Cardiac septum (tissue), 1 donor: ENCODE measurements at regions of chr11 and their contacts with region 1.

Region 1: GRCh38 chr11:116787786-116788486 is at the start of gene ZPR1:
- DNase-seq: peak; percentile 96
- total RNA-seq, gene ZPR1: 24.8 TPM

Region 2: DNA sequence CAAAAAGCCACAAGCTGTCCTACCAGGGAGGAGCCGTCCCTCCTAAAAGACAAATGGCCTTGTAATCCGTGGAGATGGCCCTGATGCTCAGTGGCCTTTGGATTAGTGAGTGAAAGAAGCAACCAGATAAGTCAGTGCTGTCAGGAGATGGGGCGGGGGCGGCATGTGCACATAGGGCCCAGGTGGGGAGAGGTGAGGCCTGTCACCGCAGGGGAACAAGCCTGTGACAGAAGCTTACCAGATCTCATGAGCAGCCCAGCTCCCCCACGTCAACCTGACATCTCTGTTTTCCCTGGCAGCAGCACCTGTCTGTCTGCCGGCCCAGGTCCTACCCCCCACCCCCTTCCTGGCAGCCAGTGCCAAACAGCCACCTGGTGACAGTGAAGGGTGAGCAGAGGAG is 177.7 kb before region 1 on chr11:
- intact Hi-C with region 1: no loop called
- DNase-seq: no peak

Region 3: DNA sequence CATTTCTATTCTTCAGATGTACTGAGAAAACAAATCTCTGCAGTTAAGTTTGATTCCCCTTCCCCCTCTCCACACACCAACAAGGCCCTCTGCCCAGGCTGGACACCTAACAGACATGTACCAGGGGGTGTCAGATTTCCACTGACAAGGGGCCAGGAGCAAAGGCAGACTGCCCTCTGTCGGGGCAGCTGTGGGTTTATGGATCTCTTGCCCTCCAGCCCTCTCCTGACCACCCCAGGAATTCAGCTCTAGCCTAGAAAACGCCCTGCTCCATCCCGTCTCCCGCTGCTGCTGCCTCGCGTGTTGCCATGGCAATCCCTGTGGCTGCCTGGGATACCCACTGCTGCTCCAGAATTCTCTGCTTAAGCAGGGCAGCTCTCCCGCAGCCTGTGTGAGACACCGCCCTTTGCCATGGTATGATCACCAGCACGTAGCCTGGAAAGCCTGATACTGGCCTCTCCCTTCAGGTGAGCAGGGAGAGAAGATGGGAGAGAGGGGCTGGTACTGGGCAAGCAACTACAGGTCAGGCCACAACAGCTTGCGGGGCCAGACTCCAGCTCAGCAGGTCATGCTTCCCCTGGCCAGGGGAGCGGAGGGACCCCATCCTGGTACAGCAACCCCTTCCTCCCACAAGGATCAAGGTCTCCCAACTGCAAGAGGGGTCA is 56.7 kb before region 1 on chr11:
- intact Hi-C with region 1: no loop called
- DNase-seq: peak; percentile 63

Region 4: GRCh38 chr11:116772443-116773202 is 15.3 kb before region 1 on chr11 and contains the start of gene BUD13:
- intact Hi-C with region 1: loop called (anchors 2 kb)
- DNase-seq: peak; percentile 97
- total RNA-seq, gene BUD13: 8.3 TPM

Region 5: DNA sequence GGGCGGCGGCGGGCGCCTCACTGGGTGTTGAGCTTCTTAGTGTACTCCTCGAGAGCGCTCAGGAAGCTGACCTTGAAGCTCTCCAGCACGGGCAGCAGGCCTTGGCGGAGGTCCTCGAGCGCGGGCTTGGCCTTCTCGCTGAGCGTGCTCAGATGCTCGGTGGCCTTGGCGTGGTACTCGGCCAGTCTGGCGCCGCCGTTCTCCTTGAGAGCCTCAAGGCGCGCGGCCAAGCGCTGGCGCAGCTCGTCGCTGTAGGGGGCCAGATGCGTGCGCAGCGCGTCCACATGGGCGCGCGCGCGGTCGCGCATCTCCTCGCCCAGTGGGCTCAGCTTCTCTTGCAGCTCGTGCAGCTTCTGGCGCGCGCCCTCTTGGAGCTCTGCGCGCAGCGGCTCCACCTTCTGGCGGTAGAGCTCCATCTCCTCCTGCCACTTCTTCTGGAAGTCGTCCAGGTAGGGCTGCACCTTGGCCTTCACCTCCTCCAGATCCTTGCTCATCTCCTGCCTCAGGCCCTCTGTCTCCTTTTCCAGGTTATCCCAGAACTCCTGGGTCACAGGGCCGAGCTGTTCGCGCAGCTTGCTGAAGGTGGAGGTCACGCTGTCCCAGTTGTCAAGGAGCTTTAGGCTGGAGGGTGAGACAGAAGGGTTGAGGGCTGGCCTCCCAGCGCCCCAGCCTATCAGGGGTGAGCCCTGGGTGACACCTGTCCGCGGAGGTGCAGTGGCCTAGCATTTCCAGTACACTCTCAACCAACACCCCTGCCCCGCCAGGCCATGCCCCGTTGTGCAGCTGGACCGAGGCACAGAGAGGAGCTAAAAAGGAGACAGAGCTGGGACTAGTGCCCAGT is 48.1 kb after region 1 on chr11:
- intact Hi-C with region 1: loop called (anchors 2 kb)
- DNase-seq: peak; percentile 90

Region 6: GRCh38 chr11:116879800-116880625 is 92.1 kb after region 1 on chr11:
- intact Hi-C with region 1: loop called (anchors 5 kb)
- DNase-seq: no peak

Region 7: DNA sequence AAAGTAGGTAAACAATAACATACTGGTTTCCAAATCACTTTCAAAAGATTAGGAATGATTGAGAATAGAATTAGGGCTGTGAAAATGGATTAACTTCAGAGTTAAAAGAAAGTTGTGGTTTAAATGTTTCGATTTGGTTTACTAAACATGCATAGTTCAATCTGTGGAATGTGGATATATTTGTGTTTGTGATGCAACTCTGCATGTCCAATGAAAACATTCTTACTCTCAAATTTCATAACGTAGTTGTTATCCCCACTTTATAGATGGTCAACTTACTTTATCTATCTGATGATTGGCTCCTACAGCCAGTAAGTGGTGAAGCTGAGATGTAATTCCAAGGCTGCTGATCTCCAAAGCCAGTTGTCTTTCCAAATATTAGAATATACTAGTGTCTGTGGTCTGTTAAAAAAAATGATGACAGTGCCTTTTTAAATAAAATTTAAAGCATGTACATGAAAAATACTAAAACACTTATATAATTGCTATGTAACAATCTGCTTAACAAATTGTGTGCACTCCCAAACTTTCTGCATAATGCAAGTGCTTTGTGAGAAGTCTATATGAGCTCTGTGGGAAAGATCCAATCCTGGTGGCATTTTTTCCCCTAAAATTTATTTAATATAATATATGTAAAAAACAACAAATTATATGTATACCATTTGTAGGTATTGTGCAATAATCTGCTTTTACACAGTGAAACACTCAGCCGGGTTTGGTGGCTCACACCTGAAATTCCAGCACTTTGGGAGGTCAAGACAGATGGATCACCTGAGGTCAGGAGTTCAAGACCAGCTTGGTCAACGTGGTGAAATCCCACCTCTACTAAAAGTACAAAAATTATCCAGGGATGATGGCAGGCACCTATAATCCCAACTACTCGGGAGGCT is 320.0 kb after region 1 on chr11:
- intact Hi-C with region 1: loop called (anchors 2 kb)
- DNase-seq: no peak